ENCODE measurements at regions of chrX and their contacts with region 1.

Region 1: DNA sequence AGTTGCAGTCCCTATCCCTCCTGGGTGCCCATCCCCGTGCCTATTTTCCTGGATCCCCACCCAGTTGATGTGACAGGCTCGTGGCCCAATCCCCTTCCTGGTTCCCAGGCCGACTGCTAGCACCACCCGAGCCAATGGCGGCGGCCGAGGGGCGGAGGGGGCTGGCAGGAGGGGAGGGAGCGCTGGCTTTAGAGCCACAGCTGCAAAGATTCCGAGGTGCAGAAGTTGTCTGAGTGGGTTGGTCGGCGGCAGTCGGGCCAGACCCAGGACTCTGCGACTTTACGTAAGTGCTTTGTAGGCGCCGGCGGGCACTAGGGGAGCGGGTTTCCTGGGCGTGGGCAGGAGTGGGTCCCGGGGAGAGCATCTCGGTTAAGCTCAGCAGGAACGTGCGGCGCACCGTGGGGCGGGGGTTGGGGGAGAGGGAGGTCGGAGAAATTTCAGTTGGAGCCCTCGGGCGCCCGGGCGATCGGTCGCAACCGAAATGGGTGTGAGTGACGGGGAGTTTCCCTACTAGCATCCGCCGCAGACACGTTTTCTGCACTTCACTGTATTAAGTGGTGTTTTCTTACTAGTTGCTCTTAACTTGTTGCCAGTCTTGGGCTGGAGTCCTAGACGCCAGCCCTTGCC is at the start of gene PLS3:
- DNase-seq: peak; percentile 60 to 90
- H3K4me3 ChIP-seq: peak within 1 kb of the TSS; percentile 64 to 74
- H3K27ac ChIP-seq: peak within 1 kb of the TSS; percentile 87 to 92
- H3K4me1 ChIP-seq: no peaks in the 10 kb centered on the region
- H3K27me3 ChIP-seq: peaks cover 5% of the 10 kb centered on the region
- CTCF ChIP-seq: peak in 1 of 3 experiments; percentile 4
- total RNA-seq, gene PLS3: 155 TPM

Region 2: GRCh38 chrX:115233497-115234455 is 327.3 kb before region 1 on chrX and contains the start of gene LRCH2:
- intact Hi-C with region 1: loop called (anchors 10 kb)
- DNase-seq: peak in 1 of 2 donors; percentile 70
- H3K4me3 ChIP-seq: peak within 1 kb of the TSS; percentile 55 to 79
- H3K27ac ChIP-seq: peak within 1 kb of the TSS; percentile 67 to 84
- H3K4me1 ChIP-seq: no peaks in the 10 kb centered on the region
- H3K27me3 ChIP-seq: no peaks in the 10 kb centered on the region
- CTCF ChIP-seq: no peak
- total RNA-seq, gene LRCH2: 5.2 TPM

Region 3: GRCh38 chrX:115330498-115331168 is 230.5 kb before region 1 on chrX:
- intact Hi-C with region 1: loop called (anchors 2 kb)
- DNase-seq: no peak
- H3K4me3 ChIP-seq: peak overlapping the region; percentile 19 to 39
- H3K27ac ChIP-seq: peak overlapping the region; percentile 56 to 62
- H3K4me1 ChIP-seq: no peaks in the 10 kb centered on the region
- H3K27me3 ChIP-seq: no peaks in the 10 kb centered on the region
- CTCF ChIP-seq: peak; percentile 68 to 85 (median 79)

Region 4: DNA sequence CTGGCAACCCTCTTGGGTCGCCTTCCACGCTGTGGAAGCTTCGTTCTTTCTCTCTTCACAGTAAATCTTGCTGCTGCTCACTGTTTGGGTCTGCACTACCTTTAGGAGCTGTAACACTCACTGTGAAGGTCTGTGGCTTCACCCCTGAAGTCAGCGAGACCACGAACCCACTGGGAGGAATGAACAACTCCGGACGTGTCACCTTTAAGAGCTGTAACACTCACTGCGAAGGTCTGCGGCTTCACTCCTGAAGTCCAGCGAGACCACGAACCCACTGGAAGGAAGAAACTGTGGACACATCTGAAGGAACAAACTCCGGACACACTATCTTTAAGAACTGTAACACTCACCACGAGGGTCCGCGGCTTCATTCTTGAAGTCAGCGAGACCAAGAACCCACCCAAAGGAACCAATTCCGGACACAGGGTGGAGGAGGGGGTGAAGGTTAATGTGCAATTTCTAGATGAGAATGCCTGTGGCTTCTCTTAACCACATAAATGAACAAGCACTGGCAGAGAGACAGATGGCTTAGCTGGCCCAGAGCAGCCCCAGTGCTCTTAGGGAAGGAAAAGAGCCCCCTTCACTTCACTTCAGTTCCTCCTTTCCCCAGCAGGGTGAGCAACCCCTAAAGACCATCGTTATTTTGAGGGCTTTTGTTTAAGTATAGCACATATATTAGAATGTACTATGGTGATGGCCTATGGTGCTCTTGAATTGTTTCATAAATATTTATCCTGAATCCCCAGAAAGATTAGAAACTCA is 198.6 kb before region 1 on chrX:
- intact Hi-C with region 1: loop called (anchors 5 kb)
- DNase-seq: no peak
- H3K4me3 ChIP-seq: no peak overlapping the region
- H3K27ac ChIP-seq: no peak overlapping the region
- H3K4me1 ChIP-seq: peaks cover 0 to 3% of the 10 kb centered on the region in 2 donors
- H3K27me3 ChIP-seq: no peaks in the 10 kb centered on the region
- CTCF ChIP-seq: no peak

Region 5: DNA sequence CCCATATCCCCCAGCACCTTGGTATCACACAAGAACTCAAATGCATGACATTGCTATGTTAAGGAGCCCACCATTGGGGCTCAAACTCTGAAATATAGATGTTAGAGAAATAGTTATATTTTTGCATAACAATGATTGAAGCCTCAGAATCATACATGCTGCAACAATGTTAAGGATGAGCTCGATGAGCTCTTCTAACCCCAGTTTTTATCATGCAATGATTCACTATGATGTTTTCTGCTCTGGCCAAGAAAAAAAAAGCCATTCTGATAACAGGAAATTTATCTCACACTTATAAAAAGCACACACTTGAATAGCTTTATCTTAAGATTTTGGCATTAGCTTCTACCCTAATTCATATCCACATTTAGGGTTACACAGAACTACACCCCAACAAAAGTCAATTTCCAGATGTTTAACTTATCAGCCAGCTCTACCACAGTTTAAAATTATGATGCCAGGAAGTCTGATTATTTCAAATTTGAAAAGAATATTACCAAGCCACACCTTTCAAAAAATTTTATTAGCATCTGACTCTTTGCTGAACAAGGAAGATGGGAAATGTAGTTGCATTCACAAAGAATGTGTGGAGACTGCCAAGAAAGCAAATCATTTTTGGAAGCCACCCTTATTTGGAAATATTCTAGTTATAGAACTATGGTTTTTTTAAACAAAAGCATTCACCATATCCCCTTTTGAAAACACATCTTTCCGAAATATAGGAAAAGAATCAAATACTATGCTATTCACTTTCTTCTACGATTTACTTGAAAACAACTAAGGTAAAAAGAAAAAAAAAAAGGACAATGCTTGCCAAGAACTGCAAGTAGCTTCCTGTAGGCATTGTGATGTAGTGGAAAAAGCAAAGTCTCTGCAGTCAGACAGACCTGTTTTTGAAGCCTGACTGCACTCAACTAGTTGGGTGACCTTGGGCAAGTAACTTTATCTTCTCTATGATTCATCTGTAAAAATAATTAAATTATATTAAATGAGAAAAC is 100.9 kb before region 1 on chrX:
- intact Hi-C with region 1: loop called (anchors 1 kb)
- DNase-seq: no peak
- H3K4me3 ChIP-seq: no peak overlapping the region
- H3K27ac ChIP-seq: peak overlapping the region; percentile 46 to 47
- H3K4me1 ChIP-seq: no peaks in the 10 kb centered on the region
- H3K27me3 ChIP-seq: no peaks in the 10 kb centered on the region
- CTCF ChIP-seq: no peak

Region 6: DNA sequence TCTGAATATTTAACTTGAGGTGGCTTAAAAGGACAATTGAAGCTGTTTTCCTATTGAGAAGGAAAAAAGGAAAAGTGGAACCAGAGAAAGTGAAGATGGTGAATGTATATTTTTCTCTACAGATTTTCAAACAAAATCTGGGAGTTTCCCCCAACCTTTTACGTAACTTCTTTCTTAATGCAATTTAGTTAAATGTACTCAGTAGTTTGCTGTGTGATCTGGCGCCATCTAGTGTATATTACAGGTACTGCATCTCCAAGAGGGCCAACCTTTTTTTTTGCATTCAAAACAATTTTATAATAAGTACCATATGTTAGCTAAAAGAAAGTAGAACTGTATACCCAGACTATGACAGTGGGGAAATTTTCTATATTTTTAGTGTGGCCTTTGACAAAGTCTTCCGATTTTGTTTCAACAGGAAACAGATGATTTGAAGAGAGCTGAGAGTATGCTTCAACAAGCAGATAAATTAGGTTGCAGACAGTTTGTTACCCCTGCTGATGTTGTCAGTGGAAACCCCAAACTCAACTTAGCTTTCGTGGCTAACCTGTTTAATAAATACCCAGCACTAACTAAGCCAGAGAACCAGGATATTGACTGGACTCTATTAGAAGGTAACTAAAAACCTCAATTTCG is 81.9 kb after region 1 on chrX:
- intact Hi-C with region 1: loop called (anchors 2 kb)
- DNase-seq: no peak
- H3K4me3 ChIP-seq: no peak overlapping the region
- H3K27ac ChIP-seq: peak overlapping the region in 1 of 2 donors; percentile 35
- H3K4me1 ChIP-seq: peaks cover 0 to 6% of the 10 kb centered on the region in 2 donors
- H3K27me3 ChIP-seq: no peaks in the 10 kb centered on the region
- CTCF ChIP-seq: peak; percentile 84 to 98 (median 98)